ENCODE measurements at regions of chr14 and their contacts with region 1.

Region 1: GRCh38 chr14:50060871-50061663 is 55.3 kb downstream of the VCPKMT start:
- DNase-seq: peak; percentile 75
- ATAC-seq: peak; percentile 15
- H3K4me3 Mint-ChIP-seq: peak overlapping the region; percentile 83
- H3K27ac Mint-ChIP-seq: peak overlapping the region; percentile 99
- H3K4me1 Mint-ChIP-seq: peaks cover 71% of the 10 kb centered on the region
- H3K27me3 Mint-ChIP-seq: no peaks in the 10 kb centered on the region
- CTCF ChIP-seq: no peak

Region 2: DNA sequence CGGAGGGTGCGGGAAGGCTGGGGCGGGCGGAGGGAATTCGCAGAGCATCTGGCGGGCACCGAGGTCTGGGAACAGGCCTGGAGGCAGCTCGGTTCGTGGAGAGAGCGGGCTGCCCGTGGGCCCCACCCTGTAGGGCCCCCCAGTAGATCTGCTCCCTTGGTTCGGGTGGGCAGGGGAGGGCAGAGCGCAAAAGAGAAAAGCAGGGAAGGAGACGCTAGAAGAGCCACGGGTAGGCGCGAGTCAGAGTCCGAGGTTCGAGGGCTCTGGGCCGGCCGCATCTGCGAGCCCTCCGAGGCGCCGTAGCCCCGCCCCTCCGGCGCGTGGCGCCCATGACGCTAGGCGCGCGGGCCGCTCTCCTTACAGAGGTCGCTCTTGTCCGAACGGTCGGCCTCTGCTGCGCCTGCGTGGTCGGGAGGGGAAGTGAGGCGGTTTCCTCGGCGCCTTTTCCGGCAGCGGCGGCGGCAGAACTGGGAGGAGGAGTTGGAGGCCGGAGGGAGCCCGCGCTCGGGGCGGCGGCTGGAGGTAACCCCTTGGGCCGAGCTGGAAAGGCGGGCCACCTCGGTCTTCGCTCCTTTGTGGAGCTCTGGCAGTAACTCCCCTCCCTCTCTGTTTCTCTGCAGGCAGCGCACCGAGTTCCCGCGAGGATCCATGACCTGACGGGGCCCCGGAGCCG is 168.3 kb before region 1 on chr14 and contains the start of gene ARF6:
- CTCF ChIA-PET with region 1: interaction called, 6 read pairs
- POLR2A ChIA-PET with region 1: interaction called, 41 read pairs
- intact Hi-C with region 1: loop called (anchors 5 kb)
- DNase-seq: peak; percentile 98
- ATAC-seq: peak; percentile 80
- H3K4me3 Mint-ChIP-seq: peak within 1 kb of the TSS; percentile 88
- H3K27ac Mint-ChIP-seq: peak within 1 kb of the TSS; percentile 97
- H3K4me1 Mint-ChIP-seq: peaks cover 4% of the 10 kb centered on the region
- H3K27me3 Mint-ChIP-seq: no peaks in the 10 kb centered on the region
- CTCF ChIP-seq: no peak
- total RNA-seq, gene ARF6: 170 TPM

Region 3: GRCh38 chr14:49959822-49960408 is 101.2 kb before region 1 on chr14:
- CTCF ChIA-PET with region 1: no interaction called
- POLR2A ChIA-PET with region 1: no interaction called
- intact Hi-C with region 1: no loop called
- DNase-seq: peak; percentile 42
- ATAC-seq: peak; percentile 35
- H3K4me3 Mint-ChIP-seq: no peak overlapping the region
- H3K27ac Mint-ChIP-seq: peak overlapping the region; percentile 57
- H3K4me1 Mint-ChIP-seq: peaks cover 40% of the 10 kb centered on the region
- H3K27me3 Mint-ChIP-seq: no peaks in the 10 kb centered on the region
- CTCF ChIP-seq: no peak

Region 4: DNA sequence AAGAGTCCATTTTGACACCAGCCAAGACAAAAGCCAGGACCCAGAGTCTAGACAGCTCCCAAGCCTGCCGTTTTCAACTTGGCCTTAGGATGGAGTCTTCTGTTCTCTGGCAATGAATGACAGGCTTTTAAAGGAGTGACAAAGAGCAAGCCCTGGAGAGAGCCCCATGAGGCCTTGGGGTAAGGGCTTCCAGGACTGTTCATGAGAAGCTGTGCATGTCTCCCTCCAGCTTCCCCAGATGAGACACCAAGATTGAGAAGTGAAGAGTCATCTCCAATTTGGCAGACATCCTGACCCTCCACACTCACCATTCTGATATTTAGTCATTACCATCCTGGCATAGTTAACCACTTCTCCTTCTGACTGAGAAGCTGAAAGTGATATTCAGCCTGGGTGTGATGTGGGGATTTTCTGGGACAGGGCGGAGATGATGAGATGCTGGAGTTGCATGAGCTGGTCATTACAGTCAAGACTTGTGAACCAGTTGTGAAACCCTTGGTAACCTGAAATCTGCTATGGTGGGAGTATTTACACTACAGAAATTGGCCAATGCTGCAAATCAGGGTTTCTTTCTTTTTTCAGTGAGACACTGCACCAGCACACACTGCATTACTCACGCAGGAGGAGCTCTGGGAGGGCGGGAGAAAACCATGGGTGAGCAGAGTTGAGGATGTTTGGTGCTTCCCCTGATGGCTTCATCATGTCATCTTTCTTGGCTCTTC is 22.5 kb before region 1 on chr14:
- CTCF ChIA-PET with region 1: interaction called, 18 read pairs
- POLR2A ChIA-PET with region 1: interaction called, 74 read pairs
- intact Hi-C with region 1: loop called (anchors 2 kb)
- DNase-seq: peak; percentile 90
- ATAC-seq: peak; percentile 84
- H3K4me3 Mint-ChIP-seq: peak overlapping the region; percentile 69
- H3K27ac Mint-ChIP-seq: peak overlapping the region; percentile 97
- H3K4me1 Mint-ChIP-seq: peaks cover 61% of the 10 kb centered on the region
- H3K27me3 Mint-ChIP-seq: no peaks in the 10 kb centered on the region
- CTCF ChIP-seq: no peak

Region 5: DNA sequence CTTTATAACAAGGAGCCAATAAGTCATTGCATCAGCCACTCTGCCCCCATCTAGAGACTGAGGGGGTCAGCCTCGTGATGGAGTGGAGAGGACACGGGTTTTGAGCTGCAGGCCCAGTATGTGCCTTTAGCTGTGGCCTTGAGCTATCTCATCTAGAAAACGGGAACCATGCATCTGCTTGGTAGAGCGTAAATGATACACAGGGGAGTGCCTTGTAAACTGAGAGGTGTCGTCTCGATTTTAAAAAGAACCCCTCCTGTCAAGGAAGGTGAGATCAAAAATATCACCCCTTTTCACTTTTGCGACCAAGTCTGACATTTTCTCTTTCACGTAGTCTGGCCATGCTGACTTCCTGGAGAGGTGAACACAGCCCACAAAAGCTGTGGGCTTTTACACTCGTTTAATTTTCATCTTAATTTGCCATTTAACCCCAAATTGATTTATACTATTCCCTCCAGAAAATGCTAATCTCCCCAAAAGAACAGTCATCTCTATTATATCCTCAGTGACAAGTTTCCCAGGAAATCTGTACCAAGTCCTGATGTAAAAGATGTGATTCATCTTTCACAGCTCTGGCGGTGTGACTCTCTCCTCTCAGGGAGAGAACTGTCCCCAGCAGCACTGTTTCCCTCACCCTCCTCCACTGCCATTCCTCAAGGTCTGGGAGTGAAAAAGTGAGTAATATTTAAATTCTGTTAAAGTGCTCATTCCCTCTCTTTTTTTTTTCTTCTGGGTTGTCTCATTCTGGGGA is 24.7 kb after region 1 on chr14:
- CTCF ChIA-PET with region 1: interaction called, 12 read pairs
- POLR2A ChIA-PET with region 1: interaction called, 32 read pairs
- intact Hi-C with region 1: loop called (anchors 1 kb)
- DNase-seq: peak; percentile 62
- ATAC-seq: peak; percentile 24
- H3K4me3 Mint-ChIP-seq: peak overlapping the region; percentile 56
- H3K27ac Mint-ChIP-seq: peak overlapping the region; percentile 98
- H3K4me1 Mint-ChIP-seq: peaks cover 94% of the 10 kb centered on the region
- H3K27me3 Mint-ChIP-seq: no peaks in the 10 kb centered on the region
- CTCF ChIP-seq: no peak

Region 6: DNA sequence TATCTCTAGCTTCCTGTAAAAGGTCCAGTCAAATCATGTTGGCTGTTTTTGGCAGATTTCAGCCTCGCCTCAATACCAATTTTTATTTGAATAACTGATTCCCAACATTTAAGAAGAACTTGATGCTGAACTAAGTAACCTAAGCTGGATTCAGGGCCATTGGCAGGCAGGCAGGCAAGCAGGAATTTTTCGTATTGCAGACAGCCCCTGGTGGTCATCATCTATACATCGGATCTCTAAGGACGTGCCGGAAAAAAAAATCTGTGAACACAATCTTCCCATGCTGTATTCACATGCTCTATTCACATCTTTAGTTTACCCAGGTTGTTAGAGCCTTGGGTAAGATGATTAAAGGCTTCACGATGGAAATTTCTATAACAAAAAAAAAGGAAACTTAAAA is 48.3 kb after region 1 on chr14:
- CTCF ChIA-PET with region 1: interaction called, 27 read pairs
- POLR2A ChIA-PET with region 1: interaction called, 13 read pairs
- intact Hi-C with region 1: no loop called
- DNase-seq: no peak
- ATAC-seq: no peak
- H3K4me3 Mint-ChIP-seq: no peak overlapping the region
- H3K27ac Mint-ChIP-seq: no peak overlapping the region
- H3K4me1 Mint-ChIP-seq: peaks cover 37% of the 10 kb centered on the region
- H3K27me3 Mint-ChIP-seq: no peaks in the 10 kb centered on the region
- CTCF ChIP-seq: no peak

Region 7: DNA sequence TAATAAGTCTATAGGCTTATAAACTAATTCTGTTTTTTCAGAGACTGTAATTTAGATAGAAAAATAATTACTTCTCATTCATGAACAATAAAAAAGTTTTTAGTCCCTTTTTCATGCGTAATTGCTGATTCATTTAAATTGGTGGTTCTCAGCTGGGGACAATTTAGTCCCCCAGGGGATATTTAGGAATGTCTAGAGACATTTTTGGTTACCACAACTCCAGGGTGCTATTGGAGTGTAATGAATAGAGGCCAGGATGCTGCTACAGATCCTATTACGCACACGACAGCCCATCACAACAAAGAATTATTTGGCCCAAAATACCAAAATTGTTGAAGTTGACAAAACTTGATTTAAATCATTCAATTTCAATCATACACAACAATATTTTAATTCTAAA is 78.1 kb after region 1 on chr14:
- CTCF ChIA-PET with region 1: no interaction called
- POLR2A ChIA-PET with region 1: no interaction called
- intact Hi-C with region 1: no loop called
- DNase-seq: no peak
- ATAC-seq: no peak
- H3K4me3 Mint-ChIP-seq: no peak overlapping the region
- H3K27ac Mint-ChIP-seq: no peak overlapping the region
- H3K4me1 Mint-ChIP-seq: no peaks in the 10 kb centered on the region
- H3K27me3 Mint-ChIP-seq: no peaks in the 10 kb centered on the region
- CTCF ChIP-seq: no peak